Activated naive CD4-positive, alpha-beta T cell treated with anti-CD3 and anti-CD28 coated beads, Interleukin-2, amount 10 ng/mL, durations not matched to agents 7 days and 5 days (primary cell): ENCODE measurements at regions of chr19 and their contacts with region 1.

Region 1: DNA sequence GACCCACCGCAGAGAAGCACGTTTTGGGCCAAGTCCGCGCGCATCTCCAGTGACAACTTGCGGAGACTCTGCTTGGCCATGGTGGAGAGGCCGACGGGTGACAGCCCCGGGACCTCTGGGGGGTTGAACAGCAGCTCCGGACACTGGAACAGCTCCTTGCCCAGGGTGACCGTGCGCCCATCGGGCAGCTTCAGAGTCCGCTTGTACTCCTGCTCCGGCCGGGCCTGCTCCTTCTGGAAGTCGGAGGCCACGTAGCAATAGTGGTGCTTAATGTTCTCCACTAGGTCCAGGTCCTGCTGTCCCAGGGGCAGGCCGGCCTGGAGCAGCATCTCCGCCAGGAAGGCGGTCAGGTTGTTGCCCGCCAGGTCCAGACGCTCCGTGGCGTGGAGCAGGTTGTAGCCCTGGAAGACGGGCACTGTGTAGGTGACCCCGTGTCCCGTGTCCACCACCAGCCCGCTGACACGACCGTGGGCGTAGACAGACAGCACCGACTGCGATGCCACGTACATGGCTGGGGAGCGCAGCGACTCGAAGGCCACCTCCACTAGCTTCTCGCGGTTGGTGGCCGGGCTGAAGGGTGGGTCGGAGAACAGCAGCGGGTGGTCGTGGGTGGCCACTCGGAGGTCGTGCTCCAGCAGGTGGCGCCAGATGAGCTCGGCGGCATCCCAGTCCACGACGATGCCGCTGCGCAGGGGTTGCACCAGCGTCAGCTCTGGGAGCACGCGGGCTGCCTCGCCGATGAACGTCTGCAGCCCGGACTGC is 743 bp downstream of the ACTL9 start:
- DNase-seq: peak; percentile 32
- H3K4me3 Mint-ChIP-seq: no peak overlapping the region
- H3K27ac Mint-ChIP-seq: no peak overlapping the region
- H3K4me1 Mint-ChIP-seq: peaks cover 73% of the 10 kb centered on the region
- H3K27me3 Mint-ChIP-seq: peaks cover 58% of the 10 kb centered on the region

Region 2: GRCh38 chr19:8641908-8642547 is 55.8 kb before region 1 on chr19:
- CTCF ChIA-PET with region 1: interaction called, 11 read pairs
- DNase-seq: peak; percentile 37
- H3K4me3 Mint-ChIP-seq: no peak overlapping the region
- H3K27ac Mint-ChIP-seq: no peak overlapping the region
- H3K4me1 Mint-ChIP-seq: peaks cover 3% of the 10 kb centered on the region
- H3K27me3 Mint-ChIP-seq: peaks cover 58% of the 10 kb centered on the region

Region 3: DNA sequence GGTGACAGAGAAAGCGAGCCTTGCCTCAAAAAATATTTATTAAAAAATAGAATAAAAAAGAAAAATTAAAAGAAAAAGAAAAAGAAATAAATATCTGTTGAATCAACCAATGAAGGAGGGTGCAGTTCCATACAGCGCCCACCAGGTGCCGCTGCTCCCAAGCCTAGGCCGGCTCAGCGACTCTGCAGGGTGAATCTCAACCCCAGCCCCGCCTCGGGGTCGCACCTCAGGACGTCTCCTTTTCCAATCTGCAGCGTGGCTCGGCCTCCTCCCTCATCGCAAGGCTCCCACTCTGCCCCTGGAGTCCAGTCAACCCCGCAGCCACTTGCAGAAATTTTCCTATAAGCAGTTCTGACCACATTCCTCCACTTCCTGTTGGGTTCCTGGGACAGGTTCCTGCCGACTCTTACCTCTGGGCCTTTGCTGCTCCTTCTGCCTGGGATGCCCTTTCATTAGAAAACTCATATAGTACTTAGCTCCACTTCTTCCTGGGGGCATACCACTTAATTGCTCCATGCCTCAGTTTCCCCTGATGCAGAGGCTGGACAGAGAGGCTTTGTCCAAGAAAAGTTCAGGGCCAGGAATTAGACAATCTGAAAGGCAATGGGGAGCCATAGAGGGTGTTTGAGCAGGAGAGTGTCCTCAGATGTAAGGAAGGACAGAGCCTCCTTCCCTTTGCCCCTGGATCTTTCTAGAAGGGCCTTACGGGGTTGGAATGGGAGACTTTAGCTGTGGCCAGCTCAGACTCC is 43.1 kb before region 1 on chr19:
- CTCF ChIA-PET with region 1: interaction called, 98 read pairs
- DNase-seq: peak; percentile 75
- H3K4me3 Mint-ChIP-seq: no peak overlapping the region
- H3K27ac Mint-ChIP-seq: peak overlapping the region; percentile 11
- H3K4me1 Mint-ChIP-seq: peaks cover 38% of the 10 kb centered on the region
- H3K27me3 Mint-ChIP-seq: peaks cover 60% of the 10 kb centered on the region

Region 4: GRCh38 chr19:8821748-8822241 is 123.9 kb after region 1 on chr19:
- CTCF ChIA-PET with region 1: no interaction called
- DNase-seq: no peak
- H3K4me3 Mint-ChIP-seq: no peak overlapping the region
- H3K27ac Mint-ChIP-seq: no peak overlapping the region
- H3K4me1 Mint-ChIP-seq: no peaks in the 10 kb centered on the region
- H3K27me3 Mint-ChIP-seq: no peaks in the 10 kb centered on the region